ENCODE measurements at regions of chr9 and their contacts with region 1.

Region 1: GRCh38 chr9:104863180-104863883 is 64.6 kb downstream of the ABCA1 start:
- DNase-seq: no peak
- ATAC-seq: peak; percentile 72 to 74

Region 2: GRCh38 chr9:104907278-104907951 is 44.1 kb after region 1 on chr9:
- intact Hi-C with region 1: no loop called
- DNase-seq: no peak
- ATAC-seq: peak; percentile 51 to 83

Region 3: DNA sequence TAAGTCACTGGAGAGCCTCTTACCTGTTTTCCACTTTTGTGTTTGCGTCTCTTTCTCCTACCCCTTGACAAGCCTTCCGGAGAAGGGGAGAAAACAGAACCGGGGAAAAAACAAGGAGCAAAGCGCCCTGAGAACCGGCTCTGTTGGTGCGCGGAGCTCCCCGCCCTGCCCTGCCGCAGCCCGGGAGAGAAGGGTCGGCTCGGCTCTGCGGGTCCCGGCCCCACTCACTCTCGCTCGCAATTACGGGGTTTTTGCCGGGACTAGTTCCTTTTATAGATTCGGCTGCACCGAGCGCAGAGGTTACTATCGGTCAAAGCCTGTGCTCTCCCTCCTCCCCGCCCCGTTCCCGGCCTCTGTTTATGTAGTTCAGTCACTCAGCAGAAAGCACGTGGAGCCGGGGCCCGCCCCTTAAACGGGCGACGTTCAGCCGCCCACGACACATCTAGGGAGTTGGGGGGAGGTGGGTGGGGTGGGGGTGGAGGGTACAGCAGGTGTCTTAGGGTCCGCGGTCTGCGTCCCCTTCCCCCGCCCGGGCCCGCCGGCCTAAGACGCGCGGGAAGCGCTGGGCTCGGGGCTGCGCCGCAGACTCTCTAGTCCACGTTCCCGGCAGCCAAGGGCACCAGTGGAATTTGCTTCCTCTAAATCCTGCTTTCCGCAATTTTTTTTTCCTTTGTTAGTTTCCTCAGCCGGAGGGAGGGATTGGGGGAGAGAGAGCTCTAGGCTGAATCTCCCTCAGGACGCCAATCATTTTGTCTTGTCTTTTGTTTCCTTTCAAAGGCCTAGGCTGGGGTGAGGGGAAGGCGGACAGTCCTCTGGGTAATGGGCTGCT is 64.8 kb after region 1 on chr9 and contains the start of gene ABCA1:
- intact Hi-C with region 1: loop called (anchors 10 kb)
- DNase-seq: peak; percentile 93
- ATAC-seq: peak; percentile 87 to 89
- total RNA-seq, gene ABCA1: 8.3 to 19.8 TPM

Region 4: GRCh38 chr9:104991144-104991953 is 128.0 kb after region 1 on chr9:
- intact Hi-C with region 1: loop called in 1 of 2 experiments (anchors 10 kb)
- DNase-seq: peak; percentile 93
- ATAC-seq: peak; percentile 87 to 92

Region 5: DNA sequence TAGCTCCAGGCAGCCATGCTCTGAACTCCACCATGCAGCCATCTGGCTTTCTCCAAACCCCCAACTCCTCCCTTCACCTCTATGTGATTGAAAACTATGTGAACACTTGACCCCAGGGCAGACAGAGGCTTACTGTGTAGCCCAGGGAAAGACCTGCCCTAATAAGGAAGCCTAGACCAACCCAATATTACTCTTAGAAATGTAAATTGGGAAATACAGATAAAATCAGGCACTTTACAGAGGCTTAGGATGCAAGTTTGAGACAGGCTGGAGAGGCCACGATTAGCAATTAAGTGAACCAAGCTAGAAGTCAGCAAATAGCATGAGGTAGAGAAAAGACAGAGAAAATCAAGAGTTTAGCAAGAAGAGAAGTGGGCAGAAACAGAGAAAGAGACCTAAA is 206.4 kb after region 1 on chr9:
- intact Hi-C with region 1: loop called in 1 of 2 experiments (anchors 10 kb)
- DNase-seq: no peak
- ATAC-seq: no peak

Region 6: DNA sequence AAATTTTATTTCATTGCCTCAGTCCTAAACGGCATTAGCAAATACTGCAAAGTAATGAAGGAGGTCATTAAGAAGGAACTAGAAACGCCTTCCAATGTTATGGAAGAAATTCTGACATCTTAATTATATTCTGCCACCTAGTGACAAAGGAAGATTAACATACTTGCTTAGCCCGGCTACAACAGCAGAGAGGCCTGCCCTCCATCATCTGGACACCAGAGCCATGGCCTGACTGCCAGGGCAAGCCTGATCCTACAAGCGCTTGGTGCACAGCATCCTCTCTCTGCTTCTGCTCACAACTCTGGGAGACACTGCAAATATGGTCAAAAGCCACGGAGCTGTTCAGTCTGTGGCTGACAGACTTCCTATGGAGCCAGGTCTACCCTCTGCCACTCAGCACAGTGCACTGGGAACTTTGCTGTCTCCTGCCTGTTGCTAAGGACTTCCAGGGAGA is 293.8 kb after region 1 on chr9:
- intact Hi-C with region 1: loop called (anchors 2 to 10 kb)
- DNase-seq: peak; percentile 47
- ATAC-seq: peak; percentile 86 to 89